ENCODE measurements at regions of chr13 and their contacts with region 1.

Region 1: DNA sequence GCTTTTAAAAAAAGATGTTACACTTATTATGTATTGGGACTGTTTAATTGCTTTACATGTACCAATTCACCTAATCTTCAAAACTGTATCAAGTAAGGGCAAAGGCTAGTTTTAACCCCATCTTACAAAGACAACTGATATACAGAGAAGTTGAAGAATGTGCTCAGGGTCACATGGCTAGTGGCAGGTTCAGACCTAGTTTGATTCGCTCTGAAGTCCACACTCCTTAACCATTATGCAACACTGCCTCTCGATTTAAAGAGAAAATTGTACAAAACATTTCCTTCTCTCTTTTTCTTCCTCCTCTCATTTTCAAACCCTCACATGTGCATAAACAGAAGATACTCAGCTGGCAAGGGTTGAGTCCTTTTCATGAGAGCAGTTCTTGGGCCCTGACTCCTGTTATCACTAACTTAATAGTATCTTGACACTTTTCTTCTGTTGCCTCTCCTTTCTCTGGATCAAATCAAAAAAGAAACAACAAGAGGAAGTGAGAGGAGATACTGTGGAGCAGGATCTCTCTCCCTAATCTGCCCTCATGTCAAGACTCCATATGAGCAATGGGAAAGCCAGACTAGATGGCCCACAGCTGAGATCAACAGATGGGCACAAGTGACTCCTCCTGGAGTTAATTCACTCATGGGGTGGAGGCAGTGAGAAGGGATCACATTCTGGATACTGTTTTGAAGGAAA is 19.0 kb upstream of the N4BP2L1 start:
- DNase-seq: no peak
- ATAC-seq: no peak
- H3K4me3 ChIP-seq: no peak overlapping the region
- H3K27ac ChIP-seq: no peak overlapping the region
- H3K4me1 ChIP-seq: peaks cover 1% of the 10 kb centered on the region; the same call in 1 of the 2 replicates
- H3K27me3 ChIP-seq: no peaks in the 10 kb centered on the region
- CTCF ChIP-seq: no peak
- POLR2A ChIP-seq: no peak
- RAD21 ChIP-seq: no peak

Region 2: GRCh38 chr13:32491028-32491427 is 44.1 kb after region 1 on chr13:
- CTCF ChIA-PET with region 1: no interaction called
- POLR2A ChIA-PET with region 1: no interaction called
- dilution Hi-C with region 1: no loop called
- in situ Hi-C with region 1: no loop called
- intact Hi-C with region 1: loop called (anchors 5 kb)
- DNase-seq: no peak
- ATAC-seq: no peak
- H3K4me3 ChIP-seq: no peak overlapping the region
- H3K27ac ChIP-seq: no peak overlapping the region
- H3K4me1 ChIP-seq: no peaks in the 10 kb centered on the region
- H3K27me3 ChIP-seq: no peaks in the 10 kb centered on the region
- CTCF ChIP-seq: no peak
- POLR2A ChIP-seq: no peak
- RAD21 ChIP-seq: no peak